ENCODE measurements at regions of chr4 and their contacts with region 1.

Region 1: GRCh38 chr4:111512081-111512783 is 633.0 kb upstream of the FAM241A start:
- DNase-seq: no peak
- ATAC-seq: no peak

Region 2: GRCh38 chr4:111530446-111530845 is 18.2 kb after region 1 on chr4:
- intact Hi-C with region 1: loop called in 1 of 2 experiments (anchors 1 kb)
- DNase-seq: no peak
- ATAC-seq: no peak